ENCODE measurements at regions of chr2 and their contacts with region 1.

Region 1: GRCh38 chr2:216108967-216109921 is at the start of gene XRCC5:
- DNase-seq: peak; percentile 98
- ATAC-seq: peak; percentile 84
- H3K4me3 Mint-ChIP-seq: peak within 1 kb of the TSS; percentile 99
- H3K27ac Mint-ChIP-seq: peak within 1 kb of the TSS; percentile 99
- H3K4me1 Mint-ChIP-seq: peaks cover 54% of the 10 kb centered on the region
- H3K27me3 Mint-ChIP-seq: peaks cover 3% of the 10 kb centered on the region
- total RNA-seq, gene XRCC5: 307 to 424 TPM

Region 2: GRCh38 chr2:216034065-216034464 is 75.2 kb before region 1 on chr2:
- CTCF ChIA-PET with region 1: interaction called, 12 read pairs
- DNase-seq: peak; percentile 88
- ATAC-seq: peak; percentile 57
- H3K4me3 Mint-ChIP-seq: no peak overlapping the region
- H3K27ac Mint-ChIP-seq: no peak overlapping the region
- H3K4me1 Mint-ChIP-seq: peaks cover 50% of the 10 kb centered on the region
- H3K27me3 Mint-ChIP-seq: no peaks in the 10 kb centered on the region

Region 3: GRCh38 chr2:216057688-216058193 is 51.5 kb before region 1 on chr2:
- CTCF ChIA-PET with region 1: interaction called, 16 read pairs
- DNase-seq: peak; percentile 84
- ATAC-seq: peak; percentile 98
- H3K4me3 Mint-ChIP-seq: peak overlapping the region; percentile 59
- H3K27ac Mint-ChIP-seq: peak overlapping the region; percentile 97
- H3K4me1 Mint-ChIP-seq: peaks cover 39% of the 10 kb centered on the region
- H3K27me3 Mint-ChIP-seq: no peaks in the 10 kb centered on the region

Region 4: GRCh38 chr2:216081487-216082116 is 27.6 kb before region 1 on chr2 and contains the starts of genes PECR and TMEM169:
- CTCF ChIA-PET with region 1: interaction called, 28 read pairs
- DNase-seq: peak; percentile 87
- ATAC-seq: peak; percentile 96
- H3K4me3 Mint-ChIP-seq: peak within 1 kb of the TSS; percentile 87
- H3K27ac Mint-ChIP-seq: peak within 1 kb of the TSS; percentile 83
- H3K4me1 Mint-ChIP-seq: peaks cover 54% of the 10 kb centered on the region
- H3K27me3 Mint-ChIP-seq: no peaks in the 10 kb centered on the region
- total RNA-seq, gene PECR: 21.6 to 31.9 TPM
- total RNA-seq, gene TMEM169: 0.75 to 1.1 TPM

Region 5: DNA sequence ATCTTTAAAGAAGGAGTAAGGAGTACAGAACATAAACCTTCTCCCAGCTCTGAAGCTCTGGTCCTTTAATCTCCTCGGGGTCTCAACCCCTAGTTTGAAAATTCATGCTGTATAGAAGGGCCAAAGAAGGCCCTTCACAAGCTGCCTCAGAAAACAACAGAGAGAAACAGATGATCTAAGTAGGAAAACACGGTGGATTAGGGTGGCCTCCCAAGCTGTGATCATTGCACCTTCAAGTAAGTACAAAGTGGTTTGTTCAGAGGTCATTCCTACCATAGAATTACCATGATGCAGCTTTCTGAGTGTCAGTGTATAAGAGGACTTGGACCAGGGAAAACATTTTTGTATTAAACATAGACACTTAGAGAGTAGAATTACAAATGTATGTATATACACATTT is 16.6 kb before region 1 on chr2:
- CTCF ChIA-PET with region 1: interaction called, 12 read pairs
- DNase-seq: no peak
- ATAC-seq: no peak
- H3K4me3 Mint-ChIP-seq: no peak overlapping the region
- H3K27ac Mint-ChIP-seq: no peak overlapping the region
- H3K4me1 Mint-ChIP-seq: peaks cover 19% of the 10 kb centered on the region
- H3K27me3 Mint-ChIP-seq: peaks cover 3% of the 10 kb centered on the region

Region 6: DNA sequence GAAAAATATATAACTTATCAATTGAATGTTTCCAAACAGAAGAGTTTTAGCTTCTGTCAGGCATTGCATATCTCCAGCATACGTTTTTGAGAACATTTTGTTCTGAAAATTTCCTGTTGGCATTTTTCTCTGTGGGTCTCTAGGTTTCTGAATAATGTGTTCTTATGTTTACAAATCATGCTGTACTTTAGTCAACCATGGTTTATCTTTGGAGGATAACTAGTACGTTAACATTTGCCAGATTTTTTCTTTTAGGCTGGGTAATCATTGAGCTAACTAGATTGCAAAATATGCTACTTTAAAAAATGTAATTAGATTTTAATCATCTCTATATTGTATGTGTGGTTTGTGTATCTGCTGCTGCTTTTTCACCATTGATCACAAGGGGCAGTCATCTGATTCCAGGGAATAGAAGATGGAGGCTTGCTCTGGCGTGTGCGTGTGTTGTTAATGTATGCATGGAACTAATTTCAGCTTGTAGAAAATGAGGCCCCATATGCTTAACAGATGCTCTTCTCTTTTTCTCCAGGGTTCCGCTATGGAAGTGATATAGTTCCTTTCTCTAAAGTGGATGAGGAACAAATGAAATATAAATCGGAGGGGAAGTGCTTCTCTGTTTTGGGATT is 21.2 kb after region 1 on chr2:
- CTCF ChIA-PET with region 1: interaction called, 13 read pairs
- DNase-seq: no peak
- ATAC-seq: no peak
- H3K4me3 Mint-ChIP-seq: no peak overlapping the region
- H3K27ac Mint-ChIP-seq: no peak overlapping the region
- H3K4me1 Mint-ChIP-seq: peaks cover 51% of the 10 kb centered on the region
- H3K27me3 Mint-ChIP-seq: no peaks in the 10 kb centered on the region

Measured in activated CD8-positive, alpha-beta memory T cell treated with anti-CD3 and anti-CD28 coated beads, Interleukin-2, amount 10 ng/mL, durations not matched to agents 7 days and 5 days (primary cell).